MCF 10A (cell line): ENCODE measurements at regions of chr11 and their contacts with region 1.

Region 1: GRCh38 chr11:59171508-59172322 is at the start of gene DTX4:
- DNase-seq: peak; percentile 91
- H3K4me3 Mint-ChIP-seq: no peak within 1 kb of the TSS
- H3K27ac Mint-ChIP-seq: peak within 1 kb of the TSS; percentile 88
- H3K4me1 Mint-ChIP-seq: peaks cover 28% of the 10 kb centered on the region
- H3K27me3 Mint-ChIP-seq: no peaks in the 10 kb centered on the region
- CTCF ChIP-seq: peak; percentile 65
- total RNA-seq, gene DTX4: 3.4 and 4.2 TPM in 2 replicates

Region 2: GRCh38 chr11:59142530-59143507 is 28.9 kb before region 1 on chr11 and contains the start of gene FAM111A:
- CTCF ChIA-PET with region 1: interaction called, 10 read pairs
- POLR2A ChIA-PET with region 1: interaction called, 28 read pairs
- intact Hi-C with region 1: no loop called
- DNase-seq: peak; percentile 95
- H3K4me3 Mint-ChIP-seq: peak within 1 kb of the TSS; percentile 97
- H3K27ac Mint-ChIP-seq: peak within 1 kb of the TSS; percentile 98
- H3K4me1 Mint-ChIP-seq: peaks cover 50% of the 10 kb centered on the region
- H3K27me3 Mint-ChIP-seq: no peaks in the 10 kb centered on the region
- CTCF ChIP-seq: peak; percentile 6
- total RNA-seq, gene FAM111A: 26.3 and 27.7 TPM in 2 replicates

Region 3: GRCh38 chr11:59186130-59186594 is 14.4 kb after region 1 on chr11:
- CTCF ChIA-PET with region 1: interaction called, 223 read pairs
- POLR2A ChIA-PET with region 1: interaction called, 39 read pairs
- intact Hi-C with region 1: loop called (anchors 2 kb)
- DNase-seq: peak; percentile 55
- H3K4me3 Mint-ChIP-seq: no peak overlapping the region
- H3K27ac Mint-ChIP-seq: no peak overlapping the region
- H3K4me1 Mint-ChIP-seq: peaks cover 14% of the 10 kb centered on the region
- H3K27me3 Mint-ChIP-seq: no peaks in the 10 kb centered on the region
- CTCF ChIP-seq: peak; percentile 61

Region 4: DNA sequence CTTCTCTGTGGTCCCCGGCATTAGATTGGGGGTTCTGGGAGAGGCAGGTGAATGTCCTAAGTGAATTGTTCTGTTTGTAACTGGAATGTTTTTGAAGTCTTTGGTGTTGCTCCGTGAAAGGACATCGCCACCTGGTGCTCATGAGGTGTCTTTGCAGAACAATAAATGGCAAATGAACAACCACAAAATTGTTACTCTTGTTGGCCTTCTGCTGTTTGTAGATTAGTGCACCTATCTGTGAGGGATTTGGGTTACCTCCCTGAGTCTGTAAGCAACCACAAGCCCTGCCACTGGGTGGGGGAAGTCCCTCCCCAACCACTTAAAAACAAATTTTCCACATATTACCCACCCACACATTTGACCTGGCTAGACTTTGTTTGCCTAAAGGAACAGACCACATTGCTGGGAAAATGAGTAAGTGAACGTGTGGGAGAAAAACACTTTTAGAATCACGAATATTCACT is 36.3 kb after region 1 on chr11:
- CTCF ChIA-PET with region 1: interaction called, 530 read pairs
- POLR2A ChIA-PET with region 1: interaction called, 10 read pairs
- intact Hi-C with region 1: loop called (anchors 1 kb)
- DNase-seq: peak; percentile 59
- H3K4me3 Mint-ChIP-seq: no peak overlapping the region
- H3K27ac Mint-ChIP-seq: no peak overlapping the region
- H3K4me1 Mint-ChIP-seq: peaks cover 11% of the 10 kb centered on the region
- H3K27me3 Mint-ChIP-seq: peaks cover 17% of the 10 kb centered on the region
- CTCF ChIP-seq: peak; percentile 62

Region 5: GRCh38 chr11:59283825-59284772 is 112.4 kb after region 1 on chr11:
- CTCF ChIA-PET with region 1: interaction called, 20 read pairs
- POLR2A ChIA-PET with region 1: interaction called, 6 read pairs
- intact Hi-C with region 1: loop called (anchors 1 kb)
- DNase-seq: peak; percentile 67
- H3K4me3 Mint-ChIP-seq: no peak overlapping the region
- H3K27ac Mint-ChIP-seq: no peak overlapping the region
- H3K4me1 Mint-ChIP-seq: peaks cover 7% of the 10 kb centered on the region
- H3K27me3 Mint-ChIP-seq: peaks cover 44% of the 10 kb centered on the region
- CTCF ChIP-seq: peak; percentile 74

Region 6: DNA sequence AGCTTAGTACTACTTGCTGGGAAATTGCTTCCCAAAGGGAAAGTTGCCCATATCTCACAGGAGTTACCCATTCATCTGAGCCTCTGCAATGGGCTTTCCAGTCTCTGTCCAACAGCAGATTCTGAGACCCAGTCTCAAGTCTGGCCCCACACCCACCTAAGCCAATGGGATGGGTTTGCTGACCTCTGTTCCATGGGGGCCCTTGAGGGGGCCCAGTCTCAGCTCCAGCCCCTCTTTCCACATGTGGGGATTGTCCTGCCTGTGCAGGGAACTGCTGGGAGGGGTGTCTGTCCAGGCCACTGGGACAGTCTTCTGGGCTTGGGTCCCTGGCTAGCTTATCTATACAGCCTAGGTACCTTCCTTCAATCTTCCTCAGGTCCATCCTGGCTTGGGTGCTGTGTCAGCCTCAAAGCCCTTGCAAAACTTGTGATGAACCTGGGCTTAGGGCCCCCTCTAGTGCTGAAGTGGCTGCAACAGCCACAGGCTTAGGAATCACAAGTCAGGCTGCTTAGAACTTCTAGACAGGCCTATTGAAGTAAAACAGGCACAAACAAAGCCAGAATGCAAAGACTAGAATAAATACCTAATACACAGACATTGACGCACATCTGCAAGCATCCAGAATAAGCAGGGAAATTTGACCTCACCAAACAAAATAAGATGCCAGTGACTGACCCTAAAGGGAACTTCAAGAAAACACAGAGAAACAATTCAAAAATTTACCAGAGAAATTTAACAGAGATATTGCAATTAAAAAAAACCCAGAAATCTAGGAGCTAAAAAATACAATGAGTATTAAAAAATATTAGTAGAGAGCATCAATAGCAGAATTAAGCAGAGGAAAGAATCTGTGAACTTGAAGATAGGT is 508.8 kb after region 1 on chr11:
- CTCF ChIA-PET with region 1: no interaction called
- POLR2A ChIA-PET with region 1: no interaction called
- intact Hi-C with region 1: loop called (anchors 2 kb)
- DNase-seq: peak; percentile 76
- H3K4me3 Mint-ChIP-seq: no peak overlapping the region
- H3K27ac Mint-ChIP-seq: no peak overlapping the region
- H3K4me1 Mint-ChIP-seq: no peaks in the 10 kb centered on the region
- H3K27me3 Mint-ChIP-seq: no peaks in the 10 kb centered on the region
- CTCF ChIP-seq: peak; percentile 84